Ascending aorta (tissue), 2 donors: ENCODE measurements at regions of chr14 and their contacts with region 1.

Region 1: DNA sequence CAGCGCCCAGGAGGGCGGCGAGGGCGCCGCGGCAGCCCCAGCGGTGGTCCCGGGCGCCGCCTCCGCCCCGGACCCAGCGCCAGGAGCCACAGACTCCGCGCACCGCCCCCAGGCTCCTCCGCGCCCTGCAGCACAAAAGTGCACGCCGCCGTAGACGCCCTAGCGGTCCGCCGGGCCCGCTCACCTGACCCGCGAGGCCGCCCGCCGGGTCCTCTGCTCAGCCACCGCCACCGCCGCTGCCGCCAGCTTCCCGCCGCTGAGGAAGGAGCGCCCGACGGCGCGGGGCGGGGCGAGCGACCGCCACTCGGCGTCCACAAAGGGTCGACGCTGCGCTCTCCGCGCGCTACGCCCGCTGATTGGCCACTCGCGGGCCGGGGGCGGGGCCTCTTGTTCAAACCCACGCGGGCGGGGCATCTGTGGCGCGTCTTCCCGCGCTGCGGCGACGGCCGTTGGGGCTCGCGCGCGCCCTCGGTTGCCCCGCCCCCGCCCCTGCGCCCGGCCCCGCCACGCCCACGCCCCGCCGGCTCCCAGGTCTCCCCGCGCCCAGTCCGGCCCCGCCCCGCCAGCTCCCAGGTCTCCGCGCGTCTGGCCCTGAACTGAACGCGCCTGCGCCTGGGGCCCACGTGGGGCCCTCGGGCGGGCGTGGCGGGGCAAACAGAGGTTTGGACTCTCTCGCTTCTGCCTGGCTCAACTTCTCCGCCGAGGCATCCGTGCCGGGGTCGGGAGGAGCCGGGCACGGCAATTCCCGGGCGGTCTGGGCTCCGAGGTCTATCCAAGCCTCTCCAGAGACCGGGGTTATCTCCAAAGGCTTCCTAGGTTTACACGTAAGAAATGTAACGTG is at the start of gene CDCA4:
- DNase-seq: peak; percentile 90 to 98
- H3K4me3 ChIP-seq: peak within 1 kb of the TSS; percentile 87 to 100
- H3K27ac ChIP-seq: peak within 1 kb of the TSS; percentile 51 to 69
- H3K4me1 ChIP-seq: peaks cover 10% of the 10 kb centered on the region in 2 donors
- H3K27me3 ChIP-seq: no peaks in the 10 kb centered on the region
- CTCF ChIP-seq: no peak
- total RNA-seq, gene CDCA4: 2.3 TPM

Region 2: GRCh38 chr14:104913435-104913834 is 107.6 kb before region 1 on chr14:
- intact Hi-C with region 1: no loop called
- DNase-seq: no peak
- H3K4me3 ChIP-seq: no peak overlapping the region
- H3K27ac ChIP-seq: no peak overlapping the region
- H3K4me1 ChIP-seq: no peaks in the 10 kb centered on the region
- H3K27me3 ChIP-seq: no peaks in the 10 kb centered on the region
- CTCF ChIP-seq: no peak

Region 3: DNA sequence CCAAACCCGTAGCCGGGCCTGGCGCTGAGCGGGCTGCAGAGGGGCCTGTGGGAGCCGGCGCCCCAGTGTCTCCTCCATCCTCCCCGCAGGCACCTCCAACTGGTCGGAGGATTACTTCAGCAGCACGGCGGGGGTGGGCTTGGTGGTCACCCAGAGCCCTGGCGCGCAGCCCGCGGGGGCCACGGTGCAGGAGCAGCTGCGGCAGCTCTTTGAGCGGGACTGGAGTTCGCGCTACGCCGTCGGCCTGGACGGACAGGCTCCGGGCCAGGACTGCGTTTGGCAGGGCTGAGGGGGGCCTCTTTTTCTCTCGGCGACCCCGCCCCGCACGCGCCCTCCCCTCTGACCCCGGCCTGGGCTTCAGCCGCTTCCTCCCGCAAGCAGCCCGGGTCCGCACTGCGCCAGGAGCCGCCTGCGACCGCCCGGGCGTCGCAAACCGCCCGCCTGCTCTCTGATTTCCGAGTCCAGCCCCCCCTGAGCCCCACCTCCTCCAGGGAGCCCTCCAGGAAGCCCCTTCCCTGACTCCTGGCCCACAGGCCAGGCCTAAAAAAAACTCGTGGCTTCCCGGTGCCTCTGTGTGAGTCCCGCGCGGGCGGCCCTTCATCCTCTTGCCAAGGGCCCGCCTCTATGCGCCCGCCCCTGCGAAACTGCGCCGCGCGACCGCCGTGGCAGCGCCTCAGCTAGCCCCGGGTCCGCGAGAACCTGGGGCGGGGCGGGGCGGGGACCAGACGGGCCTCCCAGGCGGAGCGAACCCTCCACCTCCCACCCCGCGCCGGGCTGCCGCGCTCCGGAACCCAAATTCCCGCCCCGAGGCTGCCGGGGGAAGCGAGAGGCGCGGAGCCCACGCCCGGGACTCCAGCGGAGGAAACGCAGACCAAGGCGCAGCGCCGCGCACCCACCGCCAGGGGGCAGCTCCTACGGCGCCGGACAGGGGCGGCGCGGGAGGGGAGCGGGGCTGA is 88.1 kb before region 1 on chr14:
- intact Hi-C with region 1: loop called (anchors 1 kb)
- DNase-seq: peak; percentile 27 to 94
- H3K4me3 ChIP-seq: peak overlapping the region; percentile 45 to 70
- H3K27ac ChIP-seq: peak overlapping the region; percentile 37 to 62
- H3K4me1 ChIP-seq: peaks cover 0 to 7% of the 10 kb centered on the region in 2 donors
- H3K27me3 ChIP-seq: no peaks in the 10 kb centered on the region
- CTCF ChIP-seq: peak; percentile 72 to 90 (median 74)

Region 4: DNA sequence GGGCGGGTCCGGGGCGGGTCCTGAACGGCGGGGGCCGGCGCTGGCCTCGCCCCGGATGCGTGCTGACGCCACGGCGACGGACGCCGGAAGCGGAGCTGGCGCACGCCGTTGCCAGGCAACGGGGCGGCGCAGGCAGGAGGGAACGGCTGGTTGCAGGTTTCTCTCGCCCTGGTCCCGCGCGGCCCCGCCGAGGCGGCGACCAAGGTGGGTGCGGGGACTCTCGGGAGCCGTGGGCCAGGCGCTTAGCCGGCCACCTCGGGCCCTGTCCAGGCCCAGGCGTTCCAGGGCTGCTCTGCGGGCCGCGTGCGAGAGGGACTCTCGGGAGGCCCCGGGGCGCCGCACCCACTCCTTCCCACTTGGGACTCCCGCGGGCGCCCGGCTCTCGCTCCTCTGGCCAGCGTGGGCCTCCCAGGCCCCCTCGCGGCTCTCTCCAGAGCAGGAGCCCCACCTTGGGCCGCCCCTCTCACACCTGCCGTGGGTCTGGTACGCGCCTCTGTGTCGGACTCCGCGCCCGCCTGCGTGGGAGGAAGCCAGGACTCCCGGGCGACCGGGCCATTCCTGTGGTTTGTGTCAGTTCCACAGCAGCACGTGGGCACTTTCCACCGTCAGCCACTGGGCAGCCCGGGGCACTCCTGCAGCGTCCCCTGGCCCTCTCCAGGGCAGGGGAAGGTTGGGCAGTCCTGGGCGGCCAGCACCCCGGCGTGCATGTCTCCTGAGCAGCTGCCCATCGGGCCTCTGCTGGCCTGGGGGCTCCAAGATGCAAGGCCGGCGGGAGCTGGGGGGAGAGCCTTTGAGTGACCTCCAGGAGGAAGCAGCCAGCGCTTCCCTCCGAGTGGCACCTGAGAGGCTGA is 35.1 kb before region 1 on chr14 and contains the start of gene CLBA1:
- intact Hi-C with region 1: loop called (anchors 1 kb)
- DNase-seq: peak in 1 of 2 donors; percentile 93
- H3K4me3 ChIP-seq: peak within 1 kb of the TSS; percentile 85 to 98
- H3K27ac ChIP-seq: peak within 1 kb of the TSS; percentile 76 to 79
- H3K4me1 ChIP-seq: peaks cover 9 to 12% of the 10 kb centered on the region in 2 donors
- H3K27me3 ChIP-seq: no peaks in the 10 kb centered on the region
- CTCF ChIP-seq: no peak
- total RNA-seq, gene CLBA1: 18.1 TPM

Region 5: DNA sequence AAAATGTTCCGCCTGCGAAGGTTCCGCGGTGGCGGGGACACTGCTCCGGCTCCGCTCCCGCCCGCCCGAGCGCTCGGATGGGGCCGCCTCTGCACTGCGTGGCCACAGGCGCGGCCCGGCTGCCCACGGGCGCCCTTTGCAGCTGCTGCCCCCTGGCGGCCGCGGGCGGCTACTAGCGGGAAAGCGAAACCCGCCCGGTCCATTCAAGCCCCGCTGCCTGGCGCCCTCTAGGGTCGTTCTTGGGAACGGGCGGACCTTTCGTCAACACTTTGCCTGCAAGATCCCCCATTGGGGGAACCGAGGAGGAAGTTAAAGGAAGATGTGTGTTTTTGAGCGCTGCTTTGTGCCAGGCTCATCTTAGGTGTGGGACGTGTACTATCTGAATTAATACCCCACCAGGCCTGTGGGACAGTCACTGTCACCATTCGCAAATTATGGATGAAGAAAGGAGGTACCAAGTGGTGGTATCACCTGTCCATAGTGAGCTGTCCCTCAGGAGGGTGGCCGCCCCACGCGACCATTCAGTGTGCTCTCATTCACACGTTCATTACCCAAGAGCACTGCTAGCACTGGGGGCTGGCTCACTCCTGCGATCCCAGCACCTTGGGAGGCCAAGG is 24.8 kb after region 1 on chr14:
- intact Hi-C with region 1: loop called (anchors 1 kb)
- DNase-seq: peak in 1 of 2 donors; percentile 95
- H3K4me3 ChIP-seq: peak overlapping the region in 1 of 2 donors; percentile 35
- H3K27ac ChIP-seq: no peak overlapping the region
- H3K4me1 ChIP-seq: no peaks in the 10 kb centered on the region
- H3K27me3 ChIP-seq: no peaks in the 10 kb centered on the region
- CTCF ChIP-seq: peak; percentile 97 to 100 (median 98)

Region 6: DNA sequence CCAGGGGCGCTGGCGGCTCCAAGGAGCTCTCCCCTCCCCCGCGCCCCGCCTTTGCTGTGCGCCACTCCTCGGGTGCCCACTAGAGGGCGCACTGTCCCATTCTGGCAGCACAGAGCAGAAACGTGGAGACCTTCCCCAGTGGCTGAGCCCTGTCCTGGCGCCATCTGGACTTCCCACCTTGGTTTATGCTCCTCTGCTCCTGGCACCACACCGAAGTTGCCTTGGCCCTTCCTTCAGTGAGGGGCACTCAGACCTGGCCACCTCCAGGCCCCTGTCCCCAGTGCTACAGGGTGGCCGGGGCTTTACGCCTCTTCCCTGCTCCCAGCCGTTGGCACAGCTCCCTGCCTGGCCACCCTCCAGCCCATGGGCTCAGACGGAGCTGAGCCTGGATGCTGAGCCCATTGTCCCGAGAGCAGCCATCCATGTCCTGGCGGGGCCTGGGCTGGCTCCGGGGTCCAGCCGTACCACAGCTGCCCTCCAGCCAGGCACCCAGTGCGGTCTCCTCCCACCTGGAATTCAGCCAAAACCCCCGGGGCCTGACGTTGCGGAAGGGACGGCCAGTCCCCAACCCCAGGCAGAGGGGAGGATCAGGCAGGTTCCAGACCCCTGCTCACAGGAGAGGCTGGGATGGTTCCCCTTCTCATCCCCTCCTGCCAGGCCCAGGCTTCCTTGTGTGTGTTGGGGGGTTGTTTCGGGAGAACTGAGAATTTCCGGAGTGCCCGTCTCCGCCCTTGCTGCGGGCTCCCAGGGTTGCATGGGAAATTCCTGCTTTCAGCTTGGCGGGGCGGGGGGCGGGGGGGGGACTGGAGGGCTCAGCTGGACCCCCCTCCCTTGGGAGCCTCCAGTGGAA is 460.1 kb after region 1 on chr14:
- intact Hi-C with region 1: loop called (anchors 10 kb)
- DNase-seq: peak; percentile 74 to 97
- H3K4me3 ChIP-seq: peak overlapping the region; percentile 55 to 58
- H3K27ac ChIP-seq: peak overlapping the region; percentile 89 to 99
- H3K4me1 ChIP-seq: peaks cover 32 to 65% of the 10 kb centered on the region in 2 donors
- H3K27me3 ChIP-seq: no peaks in the 10 kb centered on the region
- CTCF ChIP-seq: peak; percentile 98 to 99 (median 99)

Region 7: GRCh38 chr14:105863296-105864108 is 842.5 kb after region 1 on chr14:
- intact Hi-C with region 1: no loop called
- DNase-seq: peak in 1 of 2 donors; percentile 48
- H3K4me3 ChIP-seq: no peak overlapping the region
- H3K27ac ChIP-seq: no peak overlapping the region
- H3K4me1 ChIP-seq: no peaks in the 10 kb centered on the region
- H3K27me3 ChIP-seq: no peaks in the 10 kb centered on the region
- CTCF ChIP-seq: no peak